ENCODE measurements at regions of chr16 and their contacts with region 1.

Region 1: DNA sequence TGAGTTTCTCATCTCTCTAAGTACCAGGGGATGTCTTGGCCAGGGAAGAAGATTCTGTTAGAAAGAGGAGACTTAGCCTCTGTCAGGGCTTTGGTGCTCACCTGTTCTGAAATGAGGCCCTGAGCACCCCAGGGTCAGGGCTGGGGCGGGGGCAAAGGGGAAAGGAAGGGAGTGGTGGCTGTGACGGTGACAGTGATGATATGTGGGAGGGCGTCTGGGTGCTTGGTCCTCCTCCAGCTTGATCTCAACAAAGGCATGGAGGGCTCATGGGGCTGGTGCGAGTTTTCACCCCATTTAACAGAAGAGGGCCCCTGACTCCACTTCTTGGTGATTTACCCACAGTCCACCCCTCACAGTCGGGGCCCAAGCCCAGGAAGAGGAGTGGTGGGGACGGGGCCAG is 15.1 kb downstream of the SOX8 start:
- DNase-seq: no peak
- H3K4me3 ChIP-seq: no peak overlapping the region
- H3K27ac ChIP-seq: no peak overlapping the region
- H3K4me1 ChIP-seq: peaks cover 11% of the 10 kb centered on the region
- H3K27me3 ChIP-seq: peaks cover 5% of the 10 kb centered on the region
- CTCF ChIP-seq: no peak

Region 2: DNA sequence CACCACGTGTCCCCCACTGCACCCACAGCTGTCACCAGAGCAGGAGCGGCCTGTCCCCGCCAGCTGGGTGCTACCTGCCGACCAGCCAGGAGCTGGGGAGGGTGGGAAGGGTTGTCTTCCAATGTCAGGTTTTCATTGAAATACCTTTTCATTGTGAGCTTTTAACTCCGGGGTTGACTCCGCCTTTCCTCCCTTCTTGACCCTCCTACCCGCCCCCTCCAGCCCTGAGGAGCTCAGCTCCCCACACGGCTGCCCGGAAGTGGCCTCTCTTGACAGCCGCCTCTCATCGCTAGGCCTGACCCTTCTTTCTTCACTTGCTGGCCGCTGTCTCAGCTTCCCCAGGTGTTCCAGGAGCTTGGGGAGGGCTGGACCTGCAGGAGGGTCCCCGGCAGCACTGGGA is 174.9 kb before region 1 on chr16:
- CTCF ChIA-PET with region 1: interaction called, 10 read pairs
- dilution Hi-C with region 1: no loop called
- in situ Hi-C with region 1: no loop called
- intact Hi-C with region 1: no loop called
- DNase-seq: no peak
- H3K4me3 ChIP-seq: no peak overlapping the region
- H3K27ac ChIP-seq: no peak overlapping the region
- H3K4me1 ChIP-seq: no peaks in the 10 kb centered on the region
- H3K27me3 ChIP-seq: peaks cover 8% of the 10 kb centered on the region
- CTCF ChIP-seq: no peak

Measured in mammary epithelial cell (primary cell).